Dorsolateral prefrontal cortex (tissue), 120 donors: ENCODE measurements at regions of chr2 and their contacts with region 1.

Region 1: GRCh38 chr2:211455216-211455841 is 898.9 kb downstream of the CPS1 start:
- DNase-seq: peak in 5 of 10 donors; percentile 24 to 60 (median 48)
- H3K4me3 ChIP-seq: peak overlapping the region in 13 of 59 donors; percentile 4 to 40 (median 17)
- H3K27ac ChIP-seq: peak overlapping the region in 5 of 59 donors; percentile 2 to 32 (median 16)
- H3K27me3 ChIP-seq: no peaks in the 10 kb centered on the region
- CTCF ChIP-seq: peak; percentile 77 to 98 (median 93)

Region 2: GRCh38 chr2:211367711-211368110 is 87.6 kb before region 1 on chr2:
- intact Hi-C with region 1: no loop called
- DNase-seq: no peak
- H3K4me3 ChIP-seq: no peak overlapping the region
- H3K27ac ChIP-seq: no peak overlapping the region
- H3K27me3 ChIP-seq: no peaks in the 10 kb centered on the region
- CTCF ChIP-seq: no peak

Region 3: GRCh38 chr2:211649331-211649730 is 194.0 kb after region 1 on chr2:
- intact Hi-C with region 1: no loop called
- DNase-seq: no peak
- H3K4me3 ChIP-seq: no peak overlapping the region
- H3K27ac ChIP-seq: no peak overlapping the region
- H3K27me3 ChIP-seq: no peaks in the 10 kb centered on the region
- CTCF ChIP-seq: no peak

Region 4: DNA sequence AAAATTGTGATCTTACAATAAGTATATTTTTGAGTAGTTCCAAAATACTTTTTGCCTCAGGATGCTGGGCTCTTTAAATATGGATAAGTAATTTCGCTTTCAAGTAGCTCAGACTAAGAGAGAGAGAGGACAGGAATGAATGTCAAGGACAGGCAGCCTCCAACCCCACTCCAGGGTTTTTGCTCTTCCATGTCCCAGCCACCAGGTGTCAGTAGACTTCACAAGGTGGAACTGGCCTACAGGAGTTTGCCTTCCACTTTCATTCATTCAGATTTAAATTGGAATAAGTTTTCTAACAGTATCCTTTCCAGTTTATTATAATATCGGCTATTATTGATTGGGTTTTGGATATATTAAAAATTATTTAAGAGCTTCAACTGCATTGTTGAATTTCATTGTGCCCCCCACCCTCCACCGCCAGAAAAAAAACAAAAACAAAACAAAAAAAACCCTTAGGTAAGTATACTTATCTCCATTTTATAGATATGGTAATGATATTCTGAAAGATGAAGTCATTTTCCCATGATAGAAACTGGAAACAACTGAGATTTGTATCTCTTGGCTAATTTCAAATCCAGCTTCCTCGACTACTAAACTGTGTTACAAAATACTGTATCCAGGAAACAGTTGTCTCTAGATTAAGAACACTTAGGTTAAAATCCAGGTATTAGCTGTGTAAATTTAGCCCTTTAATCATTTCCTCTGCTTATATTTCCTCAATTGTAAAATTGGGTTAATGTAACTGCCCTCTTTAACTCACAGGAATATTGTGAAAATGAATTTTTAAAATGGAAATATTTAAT is 290.2 kb after region 1 on chr2:
- intact Hi-C with region 1: loop called in 1 of 2 experiments (anchors 10 kb)
- DNase-seq: peak in 8 of 10 donors; percentile 34 to 65 (median 52)
- H3K4me3 ChIP-seq: peak overlapping the region in 1 of 59 donors; percentile 11
- H3K27ac ChIP-seq: peak overlapping the region in 5 of 59 donors; percentile 62 to 76 (median 74)
- H3K27me3 ChIP-seq: no peaks in the 10 kb centered on the region
- CTCF ChIP-seq: peak; percentile 69 to 94 (median 84)

Region 5: GRCh38 chr2:212549941-212550340 is 1094.6 kb after region 1 on chr2:
- intact Hi-C with region 1: loop called in 1 of 2 experiments (anchors 10 kb)
- DNase-seq: no peak
- H3K4me3 ChIP-seq: peak overlapping the region in 1 of 59 donors; percentile 0
- H3K27ac ChIP-seq: peak overlapping the region in 41 of 59 donors; percentile 3 to 81 (median 44)
- H3K27me3 ChIP-seq: peaks cover 0 to 5% (median 0%) of the 10 kb centered on the region in 45 donors
- CTCF ChIP-seq: no peak